Heart right ventricle (tissue), 16 donors: ENCODE measurements at regions of chr11 and their contacts with region 1.

Region 1: GRCh38 chr11:64304316-64305072 is 830 bp upstream of the ESRRA start:
- DNase-seq: peak; percentile 93 to 94
- ATAC-seq: peak; percentile 26 to 77 (median 60)
- H3K4me3 ChIP-seq: peak overlapping the region; percentile 36 to 93 (median 75)
- H3K27ac ChIP-seq: peak overlapping the region; percentile 90 to 98 (median 96)
- H3K4me1 ChIP-seq: peaks cover 18 to 55% (median 44%) of the 10 kb centered on the region in 9 donors
- H3K27me3 ChIP-seq: peaks cover 0 to 25% (median 20%) of the 10 kb centered on the region in 7 donors
- CTCF ChIP-seq: peak; percentile 84 to 96 (median 91)

Region 2: GRCh38 chr11:64204464-64204989 is 100.0 kb before region 1 on chr11:
- intact Hi-C with region 1: loop called (anchors 1 to 5 kb)
- DNase-seq: peak; percentile 82 to 85
- ATAC-seq: peak; percentile 46 to 75 (median 64)
- H3K4me3 ChIP-seq: no peak overlapping the region
- H3K27ac ChIP-seq: peak overlapping the region in 7 of 10 donors; percentile 1 to 99 (median 28)
- H3K4me1 ChIP-seq: peaks cover 7 to 55% (median 39%) of the 10 kb centered on the region in 9 donors
- H3K27me3 ChIP-seq: no peaks in the 10 kb centered on the region
- CTCF ChIP-seq: peak; percentile 39 to 83 (median 73)

Region 3: DNA sequence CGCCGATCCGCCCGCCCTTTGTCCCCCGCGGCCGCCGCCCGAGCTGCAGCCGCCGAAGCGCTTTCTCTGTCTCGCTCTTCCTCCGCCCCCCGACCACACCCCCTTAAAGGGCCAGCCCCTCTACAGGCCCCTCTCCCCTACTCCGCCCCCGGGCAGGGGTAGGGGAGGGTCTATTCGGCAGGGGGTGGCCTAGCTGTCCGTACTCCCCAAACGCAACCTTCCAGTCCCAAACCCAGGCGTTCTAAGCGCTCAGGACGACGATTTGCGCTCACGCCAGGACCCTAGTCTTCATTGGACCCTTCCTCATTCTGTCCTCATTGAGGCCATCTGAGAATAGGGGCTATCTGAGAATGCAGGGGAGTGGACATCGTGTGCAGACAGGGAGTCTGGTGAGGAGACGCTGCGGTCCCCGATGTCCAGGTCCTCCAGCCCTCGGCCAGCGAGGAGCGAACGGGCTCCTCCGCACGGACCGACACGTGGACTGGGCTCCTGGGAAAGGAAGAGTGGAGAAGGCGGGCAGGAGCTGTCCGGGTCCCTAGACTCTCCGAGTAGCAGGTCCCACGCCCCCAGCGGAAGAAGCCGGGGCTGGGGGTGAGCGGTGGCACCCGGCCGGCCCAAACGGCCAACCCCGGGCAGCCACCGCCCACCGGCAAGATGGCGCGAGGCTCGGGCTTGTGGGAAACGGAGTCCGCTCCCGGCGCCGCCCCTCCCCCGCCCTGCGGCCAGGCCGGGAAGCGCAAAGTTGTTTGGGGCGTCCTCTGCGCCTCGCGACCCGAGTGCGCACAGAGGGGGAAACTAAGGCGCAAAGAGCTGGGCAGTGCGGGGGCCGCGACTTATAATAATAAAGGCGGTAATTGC is 57.4 kb before region 1 on chr11 and contains the start of gene PPP1R14B:
- intact Hi-C with region 1: loop called in 3 of 10 experiments (anchors 2 to 5 kb)
- DNase-seq: peak; percentile 90 to 92
- ATAC-seq: peak; percentile 65 to 81 (median 76)
- H3K4me3 ChIP-seq: peak within 1 kb of the TSS; percentile 44 to 90 (median 71)
- H3K27ac ChIP-seq: peak within 1 kb of the TSS; percentile 66 to 96 (median 92)
- H3K4me1 ChIP-seq: peaks cover 14 to 57% (median 48%) of the 10 kb centered on the region in 9 donors
- H3K27me3 ChIP-seq: no peaks in the 10 kb centered on the region
- CTCF ChIP-seq: peak in 5 of 9 donors; percentile 8 to 34 (median 24)
- total RNA-seq, gene PPP1R14B: 52.4 to 194 (median 77.2) TPM

Region 4: DNA sequence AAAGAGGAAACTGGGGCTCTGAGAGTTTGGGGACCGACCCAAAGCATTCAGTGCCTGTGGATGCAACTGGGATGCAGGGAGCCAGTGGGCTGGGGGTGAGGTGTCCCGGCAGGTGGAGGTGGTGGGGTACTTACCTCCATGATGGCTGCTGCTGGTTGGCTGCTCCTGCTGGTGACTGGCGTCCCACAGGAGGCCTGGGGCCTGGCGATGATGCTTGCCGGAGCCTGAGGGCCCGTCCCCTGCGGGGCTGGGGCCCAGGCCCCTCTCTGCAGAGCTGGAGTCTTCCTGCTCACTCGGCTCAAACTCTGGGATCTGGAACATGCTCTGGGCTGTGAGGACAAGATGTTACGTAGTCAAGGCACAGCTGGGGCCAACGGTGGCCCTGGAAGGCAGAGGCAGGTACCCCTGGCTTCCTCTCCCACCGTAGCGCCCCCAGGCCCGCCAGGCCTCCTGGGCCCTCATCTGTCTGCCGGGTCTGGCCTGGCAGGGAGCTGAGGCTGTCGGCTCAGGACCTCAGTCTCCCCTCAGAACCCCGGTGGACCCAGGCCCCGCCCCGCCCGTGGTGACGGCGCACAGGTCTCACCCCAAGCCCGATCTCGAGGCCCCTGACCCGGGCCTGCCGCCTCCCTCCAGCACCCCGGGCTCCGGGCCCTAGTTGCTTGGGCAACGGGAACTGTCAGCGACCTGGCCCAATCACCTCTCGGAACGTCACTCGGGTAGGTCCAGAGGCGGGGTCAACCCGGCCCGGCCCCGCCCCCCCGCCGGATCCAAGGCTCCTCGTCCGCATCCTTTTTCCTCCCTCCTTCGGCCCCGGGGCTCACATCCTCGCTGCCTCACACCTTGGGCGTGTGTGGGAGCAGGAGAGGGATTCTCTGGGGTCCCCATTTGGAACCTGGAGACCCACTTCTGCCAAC is 20.2 kb before region 1 on chr11 and contains the start of gene BAD:
- intact Hi-C with region 1: loop called in 2 of 10 experiments (anchors 2 kb)
- DNase-seq: peak; percentile 95 to 96
- ATAC-seq: peak; percentile 90 to 96 (median 94)
- H3K4me3 ChIP-seq: peak within 1 kb of the TSS; percentile 39 to 91 (median 74)
- H3K27ac ChIP-seq: peak within 1 kb of the TSS; percentile 84 to 99 (median 95)
- H3K4me1 ChIP-seq: peaks cover 14 to 49% (median 31%) of the 10 kb centered on the region in 9 donors
- H3K27me3 ChIP-seq: no peaks in the 10 kb centered on the region
- CTCF ChIP-seq: no peak
- total RNA-seq, gene BAD: 40.7 to 106 (median 52.2) TPM

Region 5: DNA sequence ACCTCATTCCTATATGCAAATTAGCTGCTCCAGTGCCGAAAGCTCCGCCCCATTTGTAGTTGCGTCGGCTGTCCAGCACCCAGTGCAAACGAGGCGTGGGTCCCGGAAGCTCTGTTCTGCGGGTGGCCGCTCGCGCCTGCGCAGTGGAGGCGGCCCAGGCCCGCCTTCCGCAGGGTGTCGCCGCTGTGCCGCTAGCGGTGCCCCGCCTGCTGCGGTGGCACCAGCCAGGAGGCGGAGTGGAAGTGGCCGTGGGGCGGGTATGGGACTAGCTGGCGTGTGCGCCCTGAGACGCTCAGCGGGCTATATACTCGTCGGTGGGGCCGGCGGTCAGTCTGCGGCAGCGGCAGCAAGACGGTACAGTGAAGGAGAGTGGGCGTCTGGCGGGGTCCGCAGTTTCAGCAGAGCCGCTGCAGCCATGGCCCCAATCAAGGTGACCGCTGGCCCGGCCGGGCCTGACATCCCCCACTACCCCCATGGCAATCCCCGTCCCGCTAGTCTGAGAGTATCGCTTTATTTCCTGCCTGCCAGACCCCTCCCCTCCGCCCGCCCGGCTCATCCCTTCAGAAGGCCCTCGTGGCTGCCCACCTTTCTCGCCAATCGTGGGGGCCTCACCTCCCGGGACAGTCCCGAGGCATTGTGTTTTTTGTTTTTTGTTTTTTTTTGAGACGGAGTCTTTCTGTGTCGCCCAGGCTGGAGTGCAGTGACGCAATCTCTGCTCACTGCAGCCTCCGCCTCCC is 13.6 kb after region 1 on chr11 and contains the start of gene PRDX5:
- intact Hi-C with region 1: loop called in 1 of 10 experiments (anchors 1 kb)
- DNase-seq: peak; percentile 96 to 97
- ATAC-seq: peak; percentile 87 to 96 (median 93)
- H3K4me3 ChIP-seq: peak within 1 kb of the TSS; percentile 45 to 94 (median 82)
- H3K27ac ChIP-seq: peak within 1 kb of the TSS; percentile 91 to 100 (median 98)
- H3K4me1 ChIP-seq: peaks cover 5 to 47% (median 31%) of the 10 kb centered on the region in 9 donors
- H3K27me3 ChIP-seq: no peaks in the 10 kb centered on the region
- CTCF ChIP-seq: peak in 7 of 9 donors; percentile 34 to 71 (median 55)
- total RNA-seq, gene PRDX5: 264 to 395 (median 288) TPM

Region 6: DNA sequence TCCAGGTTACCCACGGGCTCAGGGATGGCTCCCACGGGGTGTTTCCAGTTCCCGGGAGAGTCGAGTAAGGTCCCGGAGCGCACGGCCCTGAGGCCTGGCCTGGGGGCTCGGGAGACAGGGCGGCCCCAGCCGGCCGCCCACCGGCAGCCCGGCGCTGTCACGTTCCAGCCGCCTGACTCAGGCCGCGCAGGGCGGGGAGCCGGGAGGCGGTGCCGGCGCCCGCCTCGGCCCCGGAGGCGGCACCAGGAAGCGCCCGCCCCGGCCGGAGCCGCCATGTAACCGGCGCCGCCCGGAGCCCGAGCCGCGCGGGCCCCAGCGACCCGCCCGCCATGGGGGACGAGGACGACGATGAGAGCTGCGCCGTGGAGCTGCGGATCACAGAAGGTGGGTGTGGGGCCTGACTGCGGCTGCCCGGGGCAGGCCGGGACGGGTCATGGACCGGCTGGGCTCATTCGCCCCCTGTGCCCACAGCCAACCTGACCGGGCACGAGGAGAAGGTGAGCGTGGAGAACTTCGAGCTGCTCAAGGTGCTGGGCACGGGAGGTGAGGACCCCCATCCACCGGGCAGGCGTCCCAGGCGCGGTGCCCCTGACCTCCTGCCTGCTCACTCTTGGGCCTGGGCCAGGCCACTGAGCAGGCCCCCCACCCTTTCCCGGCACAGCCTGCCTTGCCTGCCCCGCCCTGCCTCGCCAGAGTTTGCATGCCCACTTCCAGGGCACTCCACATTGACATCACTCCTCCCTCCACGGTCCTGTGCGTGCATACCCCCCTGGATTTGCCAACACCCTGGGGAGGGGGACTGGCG is 54.6 kb after region 1 on chr11 and contains the start of gene RPS6KA4:
- intact Hi-C with region 1: no loop called
- DNase-seq: peak; percentile 51 to 73
- ATAC-seq: peak; percentile 69 to 95 (median 80)
- H3K4me3 ChIP-seq: peak within 1 kb of the TSS; percentile 64 to 99 (median 92)
- H3K27ac ChIP-seq: peak within 1 kb of the TSS; percentile 60 to 97 (median 93)
- H3K4me1 ChIP-seq: peaks cover 8 to 48% (median 36%) of the 10 kb centered on the region in 9 donors
- H3K27me3 ChIP-seq: no peaks in the 10 kb centered on the region
- CTCF ChIP-seq: peak in 1 of 9 donors; percentile 12
- total RNA-seq, gene RPS6KA4: 10.7 to 21.9 (median 12.8) TPM